ENCODE measurements at regions of chr9 and their contacts with region 1.

Region 1: DNA sequence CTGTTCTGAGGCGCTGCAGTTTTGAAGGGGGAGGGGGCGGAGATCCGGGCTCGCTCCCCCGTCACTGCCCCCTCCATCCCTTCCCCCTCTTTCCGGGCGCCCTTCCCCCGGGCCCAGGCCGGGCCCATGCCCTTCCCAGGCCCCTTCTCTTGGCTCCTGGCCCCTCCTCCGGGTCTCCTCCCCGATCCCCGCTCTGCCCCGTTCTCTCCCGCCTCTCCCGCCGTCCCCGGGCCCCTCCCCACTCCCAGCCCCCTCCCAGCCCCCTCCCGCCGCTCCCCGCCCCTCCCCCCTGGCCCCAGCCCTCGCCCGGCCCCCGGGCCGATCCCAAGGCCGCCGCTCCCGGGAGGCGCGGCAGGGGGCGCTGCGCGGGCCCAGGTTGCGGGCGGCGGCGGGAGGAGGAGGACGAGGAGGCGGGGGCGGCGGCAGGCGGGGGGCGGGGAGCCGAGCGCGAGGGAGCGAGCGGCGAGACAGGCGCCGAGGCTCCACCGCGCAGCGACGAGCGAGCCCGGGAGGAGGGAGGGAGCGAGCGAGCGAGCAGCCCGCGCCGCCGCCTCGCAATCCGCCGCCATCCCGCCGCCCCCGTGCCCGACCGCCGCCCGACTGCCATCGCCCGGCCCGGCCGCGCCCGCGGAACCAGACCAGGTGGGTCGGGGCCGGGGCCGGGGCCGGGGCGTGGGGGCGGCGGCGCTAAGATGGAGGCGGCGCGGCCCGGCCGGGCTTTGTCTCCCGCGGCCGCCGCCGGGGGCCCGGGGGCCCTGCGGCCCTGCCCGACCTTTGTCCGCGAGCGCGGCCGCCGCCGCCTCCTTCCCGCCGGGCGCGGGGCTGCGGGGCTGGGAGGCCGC is at the start of gene PRRC2B:
- DNase-seq: peak; percentile 94
- ATAC-seq: peak; percentile 44
- H3K4me3 Mint-ChIP-seq: peak within 1 kb of the TSS; percentile 88
- H3K27ac Mint-ChIP-seq: peak within 1 kb of the TSS; percentile 90
- H3K4me1 Mint-ChIP-seq: peaks cover 43% of the 10 kb centered on the region
- H3K27me3 Mint-ChIP-seq: no peaks in the 10 kb centered on the region
- total RNA-seq, gene PRRC2B: 151 to 184 TPM

Region 2: GRCh38 chr9:131125128-131126058 is 268.4 kb before region 1 on chr9 and contains the start of gene NUP214:
- CTCF ChIA-PET with region 1: no interaction called
- POLR2A ChIA-PET with region 1: no interaction called
- intact Hi-C with region 1: loop called in 1 of 2 experiments (anchors 1 kb)
- DNase-seq: peak; percentile 100
- ATAC-seq: peak; percentile 100
- H3K4me3 Mint-ChIP-seq: peak within 1 kb of the TSS; percentile 94
- H3K27ac Mint-ChIP-seq: peak within 1 kb of the TSS; percentile 92
- H3K4me1 Mint-ChIP-seq: peaks cover 31% of the 10 kb centered on the region
- H3K27me3 Mint-ChIP-seq: no peaks in the 10 kb centered on the region
- total RNA-seq, gene NUP214: 61.4 to 97.7 TPM

Region 3: DNA sequence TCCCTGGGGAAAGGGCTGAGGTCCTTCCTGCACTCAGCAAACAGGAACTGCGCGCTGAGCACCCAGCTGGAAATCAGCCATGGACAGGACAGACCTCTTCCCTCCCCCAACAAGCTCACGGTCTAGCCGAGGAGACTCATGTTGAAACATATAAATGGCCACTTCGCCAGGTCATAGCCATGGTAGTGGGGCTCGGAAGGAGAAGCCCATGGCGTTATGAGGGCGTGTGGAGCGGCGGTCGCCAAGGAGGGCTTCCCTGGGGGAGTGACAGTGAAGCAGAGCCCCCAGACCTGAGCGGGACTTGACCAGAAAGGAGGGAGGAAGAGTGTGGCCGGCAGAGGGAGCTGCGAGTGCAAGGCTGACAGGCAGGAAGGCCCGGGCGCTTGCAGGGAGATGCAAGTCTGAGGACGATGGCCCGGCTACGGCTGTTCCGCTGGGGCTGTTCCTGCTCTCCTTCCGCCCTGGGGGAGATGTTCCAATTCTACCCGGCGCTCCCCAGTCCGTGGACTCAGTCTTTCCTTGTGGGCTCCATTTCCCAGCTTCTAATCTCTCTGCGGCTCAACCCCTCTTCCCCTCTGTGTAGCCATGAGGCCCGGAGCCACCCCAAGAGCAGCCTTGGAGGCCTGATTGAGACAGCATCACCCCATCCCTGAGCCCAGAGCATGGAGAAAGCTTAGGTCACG is 43.8 kb before region 1 on chr9:
- CTCF ChIA-PET with region 1: interaction called, 3 read pairs
- POLR2A ChIA-PET with region 1: no interaction called
- intact Hi-C with region 1: loop called in 1 of 2 experiments (anchors 1 kb)
- DNase-seq: peak; percentile 96
- ATAC-seq: peak; percentile 98
- H3K4me3 Mint-ChIP-seq: peak overlapping the region; percentile 16
- H3K27ac Mint-ChIP-seq: peak overlapping the region; percentile 65
- H3K4me1 Mint-ChIP-seq: peaks cover 9% of the 10 kb centered on the region
- H3K27me3 Mint-ChIP-seq: no peaks in the 10 kb centered on the region

Region 4: DNA sequence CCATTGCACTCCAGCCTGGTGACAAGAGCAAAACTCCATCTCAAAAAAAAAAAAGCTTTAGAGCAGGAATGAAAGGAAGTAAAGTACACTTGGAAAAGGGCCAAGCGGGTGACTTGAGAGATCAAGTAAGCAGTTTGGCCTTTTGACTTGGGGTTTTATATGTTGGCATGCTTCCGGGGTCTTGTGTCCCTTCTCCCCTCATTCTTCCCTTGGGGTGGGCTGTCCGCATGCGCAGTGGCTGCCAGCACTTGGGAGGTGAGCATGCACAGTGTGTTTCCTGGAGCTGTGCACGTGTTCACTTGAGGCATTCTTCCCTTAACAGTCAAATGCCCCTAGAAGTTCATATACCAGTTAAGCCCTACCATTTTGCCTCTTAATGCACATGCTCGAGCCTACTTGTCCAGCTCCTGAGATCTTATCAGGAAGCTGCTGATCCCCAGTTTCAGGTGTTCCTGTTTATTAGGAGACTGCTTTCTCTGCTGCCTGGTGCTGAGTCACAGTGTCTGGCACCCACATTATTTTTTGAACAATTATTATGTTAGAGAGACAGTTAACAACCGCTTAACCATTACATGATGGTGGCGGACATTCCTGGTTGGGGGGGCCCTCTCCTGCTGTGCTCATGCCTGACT is 32.5 kb before region 1 on chr9:
- CTCF ChIA-PET with region 1: no interaction called
- POLR2A ChIA-PET with region 1: no interaction called
- intact Hi-C with region 1: no loop called
- DNase-seq: peak; percentile 49
- ATAC-seq: no peak
- H3K4me3 Mint-ChIP-seq: no peak overlapping the region
- H3K27ac Mint-ChIP-seq: peak overlapping the region; percentile 74
- H3K4me1 Mint-ChIP-seq: peaks cover 26% of the 10 kb centered on the region
- H3K27me3 Mint-ChIP-seq: no peaks in the 10 kb centered on the region

Region 5: DNA sequence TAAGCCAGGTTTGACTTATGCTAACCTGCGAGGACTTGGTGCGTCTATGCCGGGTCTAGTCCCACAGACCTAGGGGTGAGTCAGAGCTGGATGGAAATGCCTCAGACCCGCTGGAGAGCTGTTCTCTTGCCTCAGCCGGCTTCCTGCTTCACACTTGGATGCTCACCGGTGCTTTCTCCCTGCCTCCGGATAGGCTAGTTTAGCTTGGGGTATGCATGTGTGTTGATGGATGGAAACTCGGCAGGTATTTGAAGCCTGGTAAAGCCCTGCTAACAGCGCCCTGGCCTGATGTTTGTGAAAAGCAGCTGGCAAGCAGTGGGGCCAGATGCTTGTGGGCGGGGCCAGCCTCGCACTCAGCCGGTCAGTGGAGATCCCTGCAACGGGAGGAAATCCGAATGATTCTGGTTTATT is 29.3 kb after region 1 on chr9:
- CTCF ChIA-PET with region 1: interaction called, 6 read pairs
- POLR2A ChIA-PET with region 1: interaction called, 5 read pairs
- intact Hi-C with region 1: loop called in 1 of 2 experiments (anchors 1 kb)
- DNase-seq: peak; percentile 64
- ATAC-seq: peak; percentile 75
- H3K4me3 Mint-ChIP-seq: no peak overlapping the region
- H3K27ac Mint-ChIP-seq: peak overlapping the region; percentile 38
- H3K4me1 Mint-ChIP-seq: peaks cover 78% of the 10 kb centered on the region
- H3K27me3 Mint-ChIP-seq: no peaks in the 10 kb centered on the region

Region 6: DNA sequence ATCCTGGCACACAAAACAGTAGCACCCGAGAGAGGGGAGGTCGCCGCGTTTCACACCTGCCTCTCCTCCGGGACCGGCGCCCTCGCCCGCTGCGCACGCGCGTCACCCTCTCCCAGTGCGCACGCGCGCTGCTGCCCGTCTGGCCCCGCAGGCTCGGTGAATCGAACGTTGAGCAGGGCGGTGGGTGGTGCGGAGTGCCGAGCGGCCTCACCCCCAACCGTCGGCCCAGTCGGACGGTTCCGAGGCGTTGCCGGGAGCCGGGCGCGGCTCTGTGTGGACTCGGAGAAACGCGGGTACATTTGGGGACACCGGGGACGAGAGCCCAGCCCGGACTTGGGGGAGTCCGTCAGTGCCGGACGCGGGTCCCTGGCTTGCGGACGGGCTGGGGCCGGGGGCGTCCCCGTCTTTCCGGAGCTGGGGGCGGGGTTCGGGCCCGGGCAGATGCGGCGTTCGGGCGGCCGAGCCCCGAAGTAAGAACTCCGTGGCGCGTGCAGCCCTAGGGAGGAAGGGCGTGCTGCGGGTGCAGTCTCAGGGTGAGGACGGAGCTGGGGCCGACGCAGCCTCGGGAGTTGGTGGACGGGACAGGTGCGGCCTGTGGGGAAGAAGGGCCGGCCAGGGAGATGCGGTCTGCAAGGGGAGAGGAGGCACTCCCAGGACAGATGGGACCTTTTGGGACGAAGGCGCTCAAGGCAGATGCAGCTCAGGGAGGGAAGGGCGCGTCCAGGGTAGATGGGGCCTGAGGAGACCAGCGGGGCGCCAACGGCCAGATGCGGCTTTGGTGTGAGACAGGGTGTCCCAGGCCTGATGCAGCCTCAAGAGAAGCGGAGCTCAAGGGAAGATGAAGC is 109.2 kb after region 1 on chr9 and contains the start of gene POMT1:
- CTCF ChIA-PET with region 1: interaction called, 4 read pairs
- POLR2A ChIA-PET with region 1: interaction called, 4 read pairs
- intact Hi-C with region 1: loop called (anchors 1 to 2 kb)
- DNase-seq: peak; percentile 94
- ATAC-seq: peak; percentile 42
- H3K4me3 Mint-ChIP-seq: peak within 1 kb of the TSS; percentile 83
- H3K27ac Mint-ChIP-seq: peak within 1 kb of the TSS; percentile 84
- H3K4me1 Mint-ChIP-seq: peaks cover 53% of the 10 kb centered on the region
- H3K27me3 Mint-ChIP-seq: no peaks in the 10 kb centered on the region
- total RNA-seq, gene POMT1: 28.2 to 30.7 TPM

Region 7: DNA sequence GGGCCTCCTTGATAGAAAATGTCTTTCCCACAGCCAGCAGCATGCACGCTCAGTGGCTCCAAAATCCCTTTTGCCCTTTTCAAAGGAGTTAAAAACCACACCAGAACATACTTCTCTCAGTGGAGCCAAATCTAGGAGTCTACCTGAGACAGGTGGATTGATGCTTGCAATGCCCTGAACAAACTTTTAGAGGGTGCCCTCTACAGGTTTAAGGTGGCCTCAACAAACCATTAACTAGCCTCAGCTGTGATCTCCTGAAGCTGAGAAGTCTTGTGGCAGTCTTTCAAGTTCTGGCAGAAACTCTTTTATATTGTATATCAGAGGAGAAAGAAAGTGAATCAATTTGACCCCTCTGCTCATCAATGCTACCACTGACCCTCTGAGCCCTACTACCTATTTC is 560.5 kb after region 1 on chr9:
- CTCF ChIA-PET with region 1: no interaction called
- POLR2A ChIA-PET with region 1: no interaction called
- intact Hi-C with region 1: no loop called
- DNase-seq: no peak
- ATAC-seq: no peak
- H3K4me3 Mint-ChIP-seq: no peak overlapping the region
- H3K27ac Mint-ChIP-seq: no peak overlapping the region
- H3K4me1 Mint-ChIP-seq: no peaks in the 10 kb centered on the region
- H3K27me3 Mint-ChIP-seq: no peaks in the 10 kb centered on the region

Region 8: GRCh38 chr9:132240753-132241493 is 847.1 kb after region 1 on chr9:
- CTCF ChIA-PET with region 1: no interaction called
- POLR2A ChIA-PET with region 1: no interaction called
- intact Hi-C with region 1: loop called in 1 of 2 experiments (anchors 2 kb)
- DNase-seq: peak; percentile 100
- ATAC-seq: peak; percentile 95
- H3K4me3 Mint-ChIP-seq: peak overlapping the region; percentile 87
- H3K27ac Mint-ChIP-seq: peak overlapping the region; percentile 91
- H3K4me1 Mint-ChIP-seq: peaks cover 10% of the 10 kb centered on the region
- H3K27me3 Mint-ChIP-seq: peaks cover 2% of the 10 kb centered on the region